HepG2 (cell line): ENCODE measurements at regions of chr5 and their contacts with region 1.

Region 1: GRCh38 chr5:148179234-148179824 is 11.0 kb downstream of the SPINK14 start:
- DNase-seq: peak; percentile 64
- ATAC-seq: peak; percentile 64
- H3K4me3 ChIP-seq: no peak overlapping the region
- H3K27ac ChIP-seq: no peak overlapping the region
- H3K4me1 ChIP-seq: no peaks in the 10 kb centered on the region
- H3K27me3 ChIP-seq: no peaks in the 10 kb centered on the region
- CTCF ChIP-seq: peak; percentile 76
- EP300 ChIP-seq: no peak
- POLR2A ChIP-seq: no peak
- RAD21 ChIP-seq: peak; percentile 68

Region 2: DNA sequence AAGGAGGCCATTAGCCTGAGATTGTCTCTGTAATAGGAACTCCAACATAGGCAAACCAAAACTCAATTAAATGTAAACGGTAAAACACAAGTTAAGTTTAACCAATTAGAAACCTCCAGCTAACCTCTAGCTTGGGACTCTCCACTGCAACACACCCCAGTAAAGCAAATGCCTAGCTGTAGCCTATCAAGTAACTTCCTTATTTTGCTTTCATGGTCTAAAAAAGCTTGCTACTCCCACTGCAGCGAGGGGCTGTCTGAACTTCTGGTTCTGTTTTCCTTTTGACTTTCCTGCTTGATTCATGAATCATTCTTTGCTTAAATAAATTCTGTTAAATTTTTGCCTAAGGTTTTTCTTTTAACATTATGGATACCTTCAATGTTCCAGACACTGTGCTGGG is 248.6 kb before region 1 on chr5:
- CTCF ChIA-PET with region 1: no interaction called
- POLR2A ChIA-PET with region 1: no interaction called
- in situ Hi-C with region 1: no loop called
- intact Hi-C with region 1: no loop called
- DNase-seq: no peak
- ATAC-seq: no peak
- H3K4me3 ChIP-seq: no peak overlapping the region
- H3K27ac ChIP-seq: no peak overlapping the region
- H3K4me1 ChIP-seq: no peaks in the 10 kb centered on the region
- H3K27me3 ChIP-seq: no peaks in the 10 kb centered on the region
- CTCF ChIP-seq: no peak
- EP300 ChIP-seq: no peak
- POLR2A ChIP-seq: no peak
- RAD21 ChIP-seq: no peak

Region 3: DNA sequence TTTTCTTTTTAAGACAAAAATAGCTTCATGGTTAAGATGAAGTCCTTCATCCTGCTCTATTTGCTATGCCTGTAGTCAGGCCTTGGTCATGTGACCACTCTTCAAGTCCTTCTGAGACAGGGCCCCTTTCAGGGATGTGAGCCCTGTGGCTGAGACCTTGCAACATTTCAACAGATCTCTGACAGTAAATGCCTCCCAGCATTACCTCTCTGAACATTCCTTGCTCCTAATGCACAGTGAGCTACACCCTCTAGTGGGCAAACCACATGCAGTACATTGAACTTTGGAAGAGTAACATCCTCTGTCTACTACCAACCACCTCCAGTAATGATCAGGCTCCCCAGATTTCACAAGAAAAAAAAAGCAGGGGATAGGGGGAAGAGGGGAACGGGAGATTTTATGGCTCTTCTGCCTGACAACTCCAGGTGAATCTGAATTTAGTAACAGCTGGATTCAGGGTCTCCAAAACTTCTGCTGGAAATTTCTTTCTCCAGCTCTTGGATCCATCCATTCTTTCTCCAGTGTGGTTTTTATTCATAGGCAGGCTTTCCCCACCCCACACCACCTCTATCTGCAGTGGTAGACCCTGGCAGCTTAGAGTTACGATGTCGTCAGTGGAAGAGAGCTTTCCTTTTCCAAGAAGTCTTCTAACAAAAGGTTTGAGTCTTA is 195.5 kb after region 1 on chr5:
- CTCF ChIA-PET with region 1: interaction called, 16 read pairs
- POLR2A ChIA-PET with region 1: no interaction called
- in situ Hi-C with region 1: loop called (anchors 10 kb)
- intact Hi-C with region 1: loop called (anchors 1 kb)
- DNase-seq: peak; percentile 72
- ATAC-seq: peak; percentile 100
- H3K4me3 ChIP-seq: no peak overlapping the region
- H3K27ac ChIP-seq: no peak overlapping the region
- H3K4me1 ChIP-seq: no peaks in the 10 kb centered on the region
- H3K27me3 ChIP-seq: no peaks in the 10 kb centered on the region
- CTCF ChIP-seq: peak; percentile 89
- EP300 ChIP-seq: no peak
- POLR2A ChIP-seq: no peak
- RAD21 ChIP-seq: peak; percentile 75

Region 4: GRCh38 chr5:148443998-148444397 is 264.7 kb after region 1 on chr5:
- CTCF ChIA-PET with region 1: no interaction called
- POLR2A ChIA-PET with region 1: no interaction called
- in situ Hi-C with region 1: no loop called
- intact Hi-C with region 1: loop called (anchors 5 kb)
- DNase-seq: peak; percentile 65
- ATAC-seq: peak; percentile 91
- H3K4me3 ChIP-seq: no peak overlapping the region
- H3K27ac ChIP-seq: no peak overlapping the region
- H3K4me1 ChIP-seq: no peaks in the 10 kb centered on the region
- H3K27me3 ChIP-seq: no peaks in the 10 kb centered on the region
- CTCF ChIP-seq: peak; percentile 72
- EP300 ChIP-seq: no peak
- POLR2A ChIP-seq: no peak
- RAD21 ChIP-seq: no peak

Region 5: DNA sequence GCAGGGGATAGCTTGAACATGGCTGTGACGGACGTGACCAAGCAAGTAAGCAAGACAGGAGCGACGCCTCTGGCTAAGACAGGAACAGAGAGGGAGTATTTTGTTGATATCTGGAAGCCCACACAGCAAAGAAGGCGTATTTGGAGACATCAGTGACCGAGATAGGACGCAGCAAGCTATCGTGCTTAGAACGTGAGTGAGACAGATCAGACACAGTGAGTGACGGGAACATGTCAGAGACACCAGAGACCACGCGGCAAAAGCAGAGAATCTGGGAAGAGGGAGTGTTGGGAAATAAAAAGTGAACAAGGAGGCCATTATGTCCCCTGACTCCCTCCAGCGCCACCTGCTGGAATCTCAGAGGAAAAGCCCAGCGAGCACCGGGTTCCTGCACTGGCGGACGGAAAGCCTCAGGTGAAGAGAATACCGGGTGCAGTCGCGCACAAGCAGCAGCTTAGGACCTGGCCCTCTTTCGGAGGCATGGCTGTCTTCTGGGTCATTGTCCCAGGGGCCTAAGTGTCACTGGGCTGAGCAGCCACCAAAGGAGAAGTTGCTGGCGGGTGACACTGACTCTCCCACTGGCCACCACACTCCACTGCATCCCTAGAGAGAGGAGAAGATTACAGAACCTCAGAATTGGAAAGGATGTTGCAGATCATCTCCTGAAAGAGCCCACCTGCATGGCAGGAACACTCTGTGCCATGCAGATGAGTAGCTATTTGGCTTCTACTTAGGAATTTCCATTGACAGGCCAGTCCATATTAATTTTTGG is 303.5 kb after region 1 on chr5:
- CTCF ChIA-PET with region 1: interaction called, 5 read pairs
- POLR2A ChIA-PET with region 1: no interaction called
- in situ Hi-C with region 1: no loop called
- intact Hi-C with region 1: loop called (anchors 5 kb)
- DNase-seq: peak; percentile 67
- ATAC-seq: peak; percentile 96
- H3K4me3 ChIP-seq: no peak overlapping the region
- H3K27ac ChIP-seq: no peak overlapping the region
- H3K4me1 ChIP-seq: peaks cover 9% of the 10 kb centered on the region; the same call in 1 of the 2 replicates
- H3K27me3 ChIP-seq: no peaks in the 10 kb centered on the region
- CTCF ChIP-seq: peak; percentile 79
- EP300 ChIP-seq: no peak
- POLR2A ChIP-seq: no peak
- RAD21 ChIP-seq: no peak

Region 6: GRCh38 chr5:148687427-148687826 is 508.1 kb after region 1 on chr5:
- CTCF ChIA-PET with region 1: no interaction called
- POLR2A ChIA-PET with region 1: no interaction called
- in situ Hi-C with region 1: no loop called
- intact Hi-C with region 1: loop called (anchors 1 kb)
- DNase-seq: peak; percentile 57
- ATAC-seq: peak; percentile 100
- H3K4me3 ChIP-seq: no peak overlapping the region
- H3K27ac ChIP-seq: no peak overlapping the region
- H3K4me1 ChIP-seq: peaks cover 3% of the 10 kb centered on the region
- H3K27me3 ChIP-seq: no peaks in the 10 kb centered on the region
- CTCF ChIP-seq: peak; percentile 60
- EP300 ChIP-seq: no peak
- POLR2A ChIP-seq: no peak
- RAD21 ChIP-seq: 0 out of 2 replicates have a peak, but pooled peaks have one; percentile 23